MCF 10A (cell line): ENCODE measurements at regions of chr18 and their contacts with region 1.

Region 1: GRCh38 chr18:58768293-58768974 is 96.2 kb upstream of the ZNF532 start:
- DNase-seq: peak; percentile 91
- H3K4me3 Mint-ChIP-seq: peak overlapping the region; percentile 64
- H3K27ac Mint-ChIP-seq: no peak overlapping the region
- H3K4me1 Mint-ChIP-seq: peaks cover 10% of the 10 kb centered on the region
- H3K27me3 Mint-ChIP-seq: peaks cover 27% of the 10 kb centered on the region
- CTCF ChIP-seq: peak; percentile 84

Region 2: DNA sequence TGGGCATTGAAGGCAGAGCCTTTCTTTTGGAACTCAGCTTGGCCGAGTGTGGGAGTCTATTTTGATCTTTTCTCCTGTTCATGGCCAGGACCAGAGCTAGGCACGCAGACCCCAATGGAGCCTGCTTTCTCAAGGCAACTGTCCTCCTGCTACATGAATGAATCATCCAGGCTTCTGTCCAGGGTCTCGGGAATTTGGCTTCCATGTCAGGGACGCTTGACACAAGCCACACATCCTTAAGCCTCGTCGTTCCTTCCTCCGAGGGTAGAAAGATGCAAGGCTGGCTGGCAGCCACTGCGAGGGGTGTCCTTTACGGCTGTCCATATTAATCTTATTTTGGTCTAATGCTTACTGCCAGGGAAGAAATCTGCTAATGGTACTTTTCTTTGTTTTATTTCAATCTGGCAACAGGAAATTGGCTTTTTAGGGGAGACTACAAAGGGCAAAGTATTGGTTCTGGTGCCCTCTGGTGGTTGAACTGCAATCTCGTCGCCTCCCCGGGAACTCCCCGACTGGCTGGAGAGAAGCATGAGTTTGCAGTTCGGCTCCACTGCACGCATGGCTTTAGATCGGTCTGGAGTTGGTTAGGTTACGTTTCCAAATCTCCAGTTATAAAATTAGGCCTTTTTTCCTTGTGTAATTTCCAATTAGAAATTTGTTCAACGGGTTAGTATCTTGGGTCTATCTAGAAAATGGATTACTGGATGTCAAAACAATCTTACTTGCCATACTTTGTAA is 274.7 kb before region 1 on chr18:
- CTCF ChIA-PET with region 1: interaction called, 19 read pairs
- POLR2A ChIA-PET with region 1: no interaction called
- intact Hi-C with region 1: loop called (anchors 1 kb)
- DNase-seq: peak; percentile 80
- H3K4me3 Mint-ChIP-seq: no peak overlapping the region
- H3K27ac Mint-ChIP-seq: no peak overlapping the region
- H3K4me1 Mint-ChIP-seq: no peaks in the 10 kb centered on the region
- H3K27me3 Mint-ChIP-seq: peaks cover 29% of the 10 kb centered on the region
- CTCF ChIP-seq: peak; percentile 78

Region 3: GRCh38 chr18:58584200-58585127 is 184.0 kb before region 1 on chr18:
- CTCF ChIA-PET with region 1: interaction called, 6 read pairs
- POLR2A ChIA-PET with region 1: no interaction called
- intact Hi-C with region 1: loop called (anchors 1 kb)
- DNase-seq: peak; percentile 42
- H3K4me3 Mint-ChIP-seq: no peak overlapping the region
- H3K27ac Mint-ChIP-seq: no peak overlapping the region
- H3K4me1 Mint-ChIP-seq: peaks cover 14% of the 10 kb centered on the region
- H3K27me3 Mint-ChIP-seq: no peaks in the 10 kb centered on the region
- CTCF ChIP-seq: no peak

Region 4: GRCh38 chr18:58838165-58838860 is 69.9 kb after region 1 on chr18:
- CTCF ChIA-PET with region 1: no interaction called
- POLR2A ChIA-PET with region 1: no interaction called
- intact Hi-C with region 1: no loop called
- DNase-seq: no peak
- H3K4me3 Mint-ChIP-seq: no peak overlapping the region
- H3K27ac Mint-ChIP-seq: no peak overlapping the region
- H3K4me1 Mint-ChIP-seq: no peaks in the 10 kb centered on the region
- H3K27me3 Mint-ChIP-seq: no peaks in the 10 kb centered on the region
- CTCF ChIP-seq: no peak

Region 5: GRCh38 chr18:59070181-59070912 is 301.9 kb after region 1 on chr18:
- CTCF ChIA-PET with region 1: interaction called, 55 read pairs
- POLR2A ChIA-PET with region 1: interaction called, 6 read pairs
- intact Hi-C with region 1: loop called (anchors 1 kb)
- DNase-seq: peak; percentile 84
- H3K4me3 Mint-ChIP-seq: no peak overlapping the region
- H3K27ac Mint-ChIP-seq: no peak overlapping the region
- H3K4me1 Mint-ChIP-seq: no peaks in the 10 kb centered on the region
- H3K27me3 Mint-ChIP-seq: no peaks in the 10 kb centered on the region
- CTCF ChIP-seq: peak; percentile 76